ENCODE measurements at regions of chr2 and their contacts with region 1.

Region 1: GRCh38 chr2:197399887-197400540 is 34.8 kb downstream of the SF3B1 start:
- DNase-seq: no peak
- ATAC-seq: no peak
- H3K4me3 Mint-ChIP-seq: no peak overlapping the region
- H3K27ac Mint-ChIP-seq: peak overlapping the region; percentile 1
- H3K4me1 Mint-ChIP-seq: no peaks in the 10 kb centered on the region
- H3K27me3 Mint-ChIP-seq: no peaks in the 10 kb centered on the region

Region 2: GRCh38 chr2:196792865-196793264 is 607.1 kb before region 1 on chr2:
- CTCF ChIA-PET with region 1: no interaction called
- POLR2A ChIA-PET with region 1: no interaction called
- intact Hi-C with region 1: loop called in 1 of 2 experiments (anchors 5 kb)
- DNase-seq: no peak
- ATAC-seq: no peak
- H3K4me3 Mint-ChIP-seq: no peak overlapping the region
- H3K27ac Mint-ChIP-seq: no peak overlapping the region
- H3K4me1 Mint-ChIP-seq: peaks cover 19% of the 10 kb centered on the region
- H3K27me3 Mint-ChIP-seq: no peaks in the 10 kb centered on the region

Region 3: GRCh38 chr2:197414515-197414914 is 14.5 kb after region 1 on chr2:
- CTCF ChIA-PET with region 1: interaction called, 7 read pairs
- POLR2A ChIA-PET with region 1: no interaction called
- intact Hi-C with region 1: loop called in 1 of 2 experiments (anchors 2 kb)
- DNase-seq: no peak
- ATAC-seq: no peak
- H3K4me3 Mint-ChIP-seq: no peak overlapping the region
- H3K27ac Mint-ChIP-seq: no peak overlapping the region
- H3K4me1 Mint-ChIP-seq: no peaks in the 10 kb centered on the region
- H3K27me3 Mint-ChIP-seq: no peaks in the 10 kb centered on the region

Region 4: DNA sequence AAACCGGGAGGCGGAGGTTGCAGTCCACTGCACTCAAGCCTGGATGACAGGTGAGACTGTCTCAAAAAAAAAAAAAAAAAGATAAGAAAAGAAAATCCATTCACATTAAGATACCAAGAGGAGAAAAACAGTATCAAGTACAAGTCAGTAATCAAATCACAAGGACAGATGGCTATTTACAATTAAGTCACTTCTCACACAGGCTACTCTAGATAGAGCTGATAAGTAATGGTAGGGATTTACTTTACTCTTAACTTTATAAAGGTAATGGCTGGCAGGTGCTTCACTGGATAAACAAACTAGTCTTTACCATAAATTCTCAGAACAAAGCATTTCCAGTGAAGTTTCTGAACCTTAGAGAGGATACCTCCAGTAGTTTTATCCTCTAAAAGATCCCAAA is 23.3 kb after region 1 on chr2:
- CTCF ChIA-PET with region 1: no interaction called
- POLR2A ChIA-PET with region 1: no interaction called
- intact Hi-C with region 1: loop called in 1 of 2 experiments (anchors 2 kb)
- DNase-seq: no peak
- ATAC-seq: no peak
- H3K4me3 Mint-ChIP-seq: no peak overlapping the region
- H3K27ac Mint-ChIP-seq: no peak overlapping the region
- H3K4me1 Mint-ChIP-seq: peaks cover 53% of the 10 kb centered on the region
- H3K27me3 Mint-ChIP-seq: no peaks in the 10 kb centered on the region

Region 5: GRCh38 chr2:197487385-197487784 is 87.4 kb after region 1 on chr2:
- CTCF ChIA-PET with region 1: no interaction called
- POLR2A ChIA-PET with region 1: no interaction called
- intact Hi-C with region 1: loop called in 1 of 2 experiments (anchors 2 kb)
- DNase-seq: no peak
- ATAC-seq: no peak
- H3K4me3 Mint-ChIP-seq: no peak overlapping the region
- H3K27ac Mint-ChIP-seq: peak overlapping the region; percentile 5
- H3K4me1 Mint-ChIP-seq: peaks cover 26% of the 10 kb centered on the region
- H3K27me3 Mint-ChIP-seq: no peaks in the 10 kb centered on the region